Activated B cell treated with CpG ODN at 0.5 μM for 24 hours (primary cell): ENCODE measurements at regions of chr20 and their contacts with region 1.

Region 1: DNA sequence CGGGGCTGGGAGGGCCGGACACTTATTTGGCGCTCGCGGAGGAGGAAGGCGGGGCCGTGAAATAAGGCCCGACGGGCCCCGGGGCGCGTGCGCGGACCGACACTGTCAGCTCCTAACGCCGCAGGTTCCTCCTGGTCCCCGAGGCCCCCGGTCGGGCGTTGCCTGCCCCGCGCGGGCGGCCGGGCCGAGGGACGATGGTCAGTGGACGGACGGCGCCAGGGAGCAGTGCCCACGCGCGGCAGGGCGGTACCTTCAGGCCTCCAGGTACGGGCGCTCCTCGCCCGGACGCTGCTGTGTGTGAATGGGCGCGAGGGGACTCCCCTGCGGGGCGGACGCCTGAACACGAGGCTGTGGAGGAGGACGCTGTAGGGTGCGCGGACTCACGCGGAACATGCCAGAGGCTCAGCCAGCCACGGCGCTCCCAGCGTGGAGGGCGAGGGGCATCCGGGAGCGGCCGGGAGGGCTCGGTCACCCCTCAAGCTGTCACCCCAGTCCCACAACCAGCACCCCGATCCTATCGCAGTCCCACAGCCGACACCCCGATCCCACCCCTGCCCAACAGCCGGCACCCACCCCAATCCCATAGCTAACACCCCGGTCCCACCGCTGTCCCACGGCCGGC is 339 bp upstream of the GMEB2 start:
- DNase-seq: peak; percentile 97
- ATAC-seq: peak; percentile 77
- H3K4me3 Mint-ChIP-seq: peak overlapping the region; percentile 91
- H3K27ac Mint-ChIP-seq: peak overlapping the region; percentile 93
- H3K4me1 Mint-ChIP-seq: peaks cover 45% of the 10 kb centered on the region
- H3K27me3 Mint-ChIP-seq: no peaks in the 10 kb centered on the region
- CTCF ChIP-seq: no peak

Region 2: DNA sequence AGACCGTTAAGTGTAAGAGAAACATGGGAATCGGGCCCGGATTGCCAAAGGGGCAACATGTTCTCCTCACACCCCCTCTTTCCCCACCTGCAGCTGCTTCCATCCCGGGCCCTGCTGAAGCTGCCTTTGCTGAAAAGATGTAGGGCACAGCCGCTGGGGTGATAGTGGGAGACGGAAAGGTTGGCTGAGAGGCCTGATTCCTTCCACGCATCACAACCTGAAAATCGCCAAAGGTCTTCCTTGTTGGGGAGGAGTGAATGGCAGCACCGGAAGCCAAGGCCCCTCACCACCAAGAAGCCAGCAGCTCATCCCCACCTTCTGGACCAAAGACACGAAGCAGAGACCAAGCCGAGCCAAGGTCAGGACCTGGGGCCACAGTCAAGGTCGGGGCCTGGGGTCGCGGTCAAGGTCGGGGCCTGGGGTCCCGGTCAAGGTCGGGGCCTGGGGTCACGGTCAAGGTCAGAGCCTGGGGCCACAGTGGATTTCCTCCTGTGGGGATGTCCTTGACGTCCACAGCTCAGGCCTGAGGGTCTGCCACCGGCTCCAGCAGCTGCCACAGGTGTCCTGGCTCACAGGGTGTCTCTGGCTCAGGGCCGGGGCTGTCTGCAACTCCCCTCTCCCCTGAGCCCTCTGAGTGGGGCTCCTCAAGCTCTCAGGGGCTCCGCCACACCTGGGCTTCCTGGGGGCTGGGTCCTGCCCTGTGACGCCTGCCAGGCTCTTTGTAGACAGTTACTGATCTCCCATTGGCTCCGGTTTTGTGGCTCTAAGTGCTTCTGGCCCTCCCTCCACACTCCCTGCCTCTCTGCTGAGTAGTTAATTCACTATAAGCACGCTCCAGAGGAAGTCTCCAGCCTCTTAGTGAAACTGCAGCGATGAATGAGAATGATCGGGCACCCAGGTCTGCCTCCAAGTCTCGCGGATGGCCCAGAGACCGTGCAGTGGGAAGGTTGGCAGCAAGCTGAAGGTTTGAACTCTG is 260.6 kb before region 1 on chr20:
- CTCF ChIA-PET with region 1: no interaction called
- POLR2A ChIA-PET with region 1: no interaction called
- intact Hi-C with region 1: no loop called
- DNase-seq: no peak
- ATAC-seq: no peak
- H3K4me3 Mint-ChIP-seq: no peak overlapping the region
- H3K27ac Mint-ChIP-seq: no peak overlapping the region
- H3K4me1 Mint-ChIP-seq: peaks cover 4% of the 10 kb centered on the region
- H3K27me3 Mint-ChIP-seq: peaks cover 15% of the 10 kb centered on the region
- CTCF ChIP-seq: no peak

Region 3: DNA sequence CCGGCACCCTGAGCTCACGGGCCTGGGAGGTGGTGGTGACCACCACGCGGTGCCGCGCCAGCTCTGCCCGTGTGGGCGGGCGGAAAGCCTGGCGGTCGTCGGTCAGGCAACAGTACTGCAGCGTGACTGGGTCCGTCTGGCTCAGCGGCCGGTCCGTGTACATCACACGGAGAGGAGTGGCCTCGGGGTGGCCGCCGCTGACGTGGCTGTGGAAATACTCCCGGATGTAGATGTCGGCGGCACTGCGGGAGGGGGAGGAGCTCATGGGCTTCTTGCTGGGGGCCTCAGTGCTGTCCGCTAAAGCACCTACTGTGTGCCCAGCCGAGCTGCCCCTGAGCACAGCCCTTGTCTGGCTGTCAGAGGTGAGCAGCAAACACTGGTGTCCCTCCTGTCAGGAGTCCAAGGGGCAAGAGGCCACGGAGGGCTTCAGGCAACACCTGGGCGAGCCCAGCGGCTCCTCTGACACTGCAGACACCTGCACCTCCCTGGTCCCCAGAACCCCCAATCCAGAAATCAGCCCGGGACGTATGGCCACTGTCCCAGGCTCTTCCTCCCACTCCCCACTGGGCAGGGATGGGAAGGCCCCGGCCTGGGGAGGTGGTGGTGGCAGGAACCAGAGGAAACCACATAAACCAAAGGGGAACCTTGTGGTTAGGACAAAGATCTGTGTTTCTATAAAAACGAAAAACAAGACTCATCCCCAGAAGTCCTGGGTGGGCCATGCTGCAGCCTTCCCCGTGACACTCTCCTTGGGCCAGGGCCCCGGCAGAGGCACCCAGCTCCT is 59.7 kb before region 1 on chr20:
- CTCF ChIA-PET with region 1: no interaction called
- POLR2A ChIA-PET with region 1: interaction called, 5 read pairs
- intact Hi-C with region 1: loop called (anchors 5 kb)
- DNase-seq: peak; percentile 62
- ATAC-seq: peak; percentile 76
- H3K4me3 Mint-ChIP-seq: peak overlapping the region; percentile 68
- H3K27ac Mint-ChIP-seq: peak overlapping the region; percentile 75
- H3K4me1 Mint-ChIP-seq: peaks cover 31% of the 10 kb centered on the region
- H3K27me3 Mint-ChIP-seq: no peaks in the 10 kb centered on the region
- CTCF ChIP-seq: no peak

Region 4: DNA sequence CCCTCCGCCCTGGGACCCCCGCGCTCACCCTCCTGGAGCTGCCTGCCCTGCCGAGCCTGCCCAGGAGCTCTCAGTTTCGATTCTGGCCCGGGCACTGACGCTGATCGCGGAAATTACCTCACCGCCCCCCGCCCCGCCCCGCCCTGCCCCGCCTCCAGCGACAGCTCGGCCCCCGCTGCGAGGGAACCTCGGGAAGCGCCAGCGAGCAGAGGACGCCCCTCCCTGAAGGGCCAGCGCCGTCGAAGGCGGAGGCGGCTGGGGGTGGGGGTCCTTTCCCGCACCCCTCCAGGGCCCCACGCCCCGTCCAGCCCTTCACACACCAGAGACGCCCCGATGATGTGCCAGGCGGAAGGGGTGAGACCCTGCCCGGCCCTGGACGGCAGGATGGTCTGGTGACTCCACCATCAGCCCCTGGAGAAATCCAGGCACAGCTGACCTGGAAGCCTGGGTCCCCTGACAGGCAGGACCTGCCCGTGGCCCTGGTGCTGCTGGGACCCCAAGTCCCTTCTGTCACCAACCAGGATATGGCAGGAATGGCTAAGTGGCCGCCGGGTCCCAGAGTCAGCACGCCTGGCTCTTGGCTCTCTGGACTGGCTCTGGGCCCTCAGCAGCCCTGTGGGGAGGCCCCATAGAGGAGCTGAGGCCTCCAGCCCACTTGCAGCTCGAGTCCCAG is 52.9 kb before region 1 on chr20 and contains the start of gene HELZ2:
- CTCF ChIA-PET with region 1: no interaction called
- POLR2A ChIA-PET with region 1: interaction called, 10 read pairs
- intact Hi-C with region 1: loop called (anchors 5 kb)
- DNase-seq: peak; percentile 55
- ATAC-seq: peak; percentile 95
- H3K4me3 Mint-ChIP-seq: peak within 1 kb of the TSS; percentile 83
- H3K27ac Mint-ChIP-seq: peak within 1 kb of the TSS; percentile 70
- H3K4me1 Mint-ChIP-seq: peaks cover 12% of the 10 kb centered on the region
- H3K27me3 Mint-ChIP-seq: peaks cover 2% of the 10 kb centered on the region
- CTCF ChIP-seq: no peak
- total RNA-seq, gene HELZ2: 25.4 and 28.9 TPM in 2 replicates

Region 5: DNA sequence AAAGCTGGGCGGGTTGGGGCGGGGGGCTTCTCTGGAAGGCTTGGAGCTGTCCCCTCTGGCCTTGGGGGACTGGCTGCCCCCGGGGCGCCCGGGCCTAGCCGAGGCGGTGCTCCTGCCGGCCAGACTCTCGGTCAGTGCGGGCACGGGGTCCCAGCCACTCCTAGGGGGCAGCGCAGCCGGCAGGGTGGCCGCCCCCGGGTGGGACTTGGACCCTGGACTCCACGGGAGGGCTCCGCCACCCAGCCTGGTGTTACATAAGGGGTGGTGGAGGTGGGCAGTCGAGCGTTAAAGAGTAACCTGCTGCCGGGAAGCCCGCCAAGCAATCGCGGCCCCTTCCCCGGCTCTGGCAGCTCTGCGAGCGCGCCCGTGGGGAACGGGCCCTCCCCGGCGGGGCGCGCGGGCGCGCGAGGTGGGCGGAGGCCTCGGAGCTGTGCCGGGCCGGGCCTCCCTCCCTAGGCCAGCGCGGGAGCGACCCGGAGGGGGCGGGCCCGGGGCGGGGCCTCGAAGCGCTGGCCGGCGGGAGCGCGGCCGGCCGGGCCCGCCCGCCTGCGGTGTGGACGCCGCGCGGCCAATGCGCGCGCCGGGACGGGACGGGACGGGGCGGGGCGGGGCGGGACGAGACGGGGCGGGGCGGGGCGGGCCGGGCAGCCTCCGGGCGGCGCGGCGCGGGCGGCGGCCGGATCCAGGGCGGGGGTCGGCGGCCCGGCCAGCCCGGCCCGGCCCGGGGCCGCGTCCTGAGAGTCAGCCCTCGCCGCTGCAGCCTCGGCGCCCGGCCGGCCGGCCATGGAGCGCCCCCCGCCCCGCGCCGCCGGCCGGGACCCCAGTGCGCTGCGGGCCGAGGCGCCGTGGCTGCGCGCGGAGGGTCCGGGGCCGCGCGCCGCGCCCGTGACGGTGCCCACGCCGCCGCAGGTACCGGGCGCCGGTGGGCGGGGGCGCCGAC is 112.2 kb after region 1 on chr20 and contains the start of gene SLC2A4RG:
- CTCF ChIA-PET with region 1: no interaction called
- POLR2A ChIA-PET with region 1: interaction called, 4 read pairs
- intact Hi-C with region 1: loop called (anchors 5 kb)
- DNase-seq: peak; percentile 73
- ATAC-seq: peak; percentile 65
- H3K4me3 Mint-ChIP-seq: peak within 1 kb of the TSS; percentile 48
- H3K27ac Mint-ChIP-seq: no peak within 1 kb of the TSS
- H3K4me1 Mint-ChIP-seq: peaks cover 28% of the 10 kb centered on the region
- H3K27me3 Mint-ChIP-seq: no peaks in the 10 kb centered on the region
- CTCF ChIP-seq: no peak
- total RNA-seq, gene SLC2A4RG: 20.9 and 28.1 TPM in 2 replicates